ENCODE measurements at regions of chr3 and their contacts with region 1.

Region 1: GRCh38 chr3:12175844-12176453 is 17.2 kb upstream of the TIMP4 start:
- DNase-seq: peak in 8 of 10 donors; percentile 45 to 73 (median 66)
- H3K4me3 ChIP-seq: no peak overlapping the region
- H3K27ac ChIP-seq: peak overlapping the region in 3 of 59 donors; percentile 1 to 34 (median 21)
- H3K27me3 ChIP-seq: no peaks in the 10 kb centered on the region
- CTCF ChIP-seq: peak; percentile 55 to 92 (median 82)

Region 2: DNA sequence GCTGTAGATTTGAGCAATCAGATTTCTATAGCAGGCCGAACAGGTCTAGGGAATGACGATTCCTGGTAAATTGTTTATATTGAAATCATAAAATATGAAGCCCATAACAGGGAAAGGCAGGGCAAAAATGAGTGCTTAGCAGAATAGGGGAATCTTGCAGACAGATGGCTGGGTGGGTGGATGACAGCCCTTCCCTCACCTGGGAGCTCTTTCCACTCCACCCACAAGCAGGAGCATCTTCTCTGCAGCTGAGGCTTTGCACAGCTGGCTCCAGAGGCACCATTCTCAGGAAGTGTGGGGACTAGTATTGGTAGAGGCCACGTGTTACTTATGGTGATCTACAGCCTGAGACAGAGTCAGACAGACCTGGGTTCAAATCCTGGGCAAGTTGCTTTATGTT is 227.6 kb before region 1 on chr3:
- intact Hi-C with region 1: loop called in 1 of 2 experiments (anchors 5 kb)
- DNase-seq: no peak
- H3K4me3 ChIP-seq: no peak overlapping the region
- H3K27ac ChIP-seq: no peak overlapping the region
- H3K27me3 ChIP-seq: no peaks in the 10 kb centered on the region
- CTCF ChIP-seq: no peak

Region 3: DNA sequence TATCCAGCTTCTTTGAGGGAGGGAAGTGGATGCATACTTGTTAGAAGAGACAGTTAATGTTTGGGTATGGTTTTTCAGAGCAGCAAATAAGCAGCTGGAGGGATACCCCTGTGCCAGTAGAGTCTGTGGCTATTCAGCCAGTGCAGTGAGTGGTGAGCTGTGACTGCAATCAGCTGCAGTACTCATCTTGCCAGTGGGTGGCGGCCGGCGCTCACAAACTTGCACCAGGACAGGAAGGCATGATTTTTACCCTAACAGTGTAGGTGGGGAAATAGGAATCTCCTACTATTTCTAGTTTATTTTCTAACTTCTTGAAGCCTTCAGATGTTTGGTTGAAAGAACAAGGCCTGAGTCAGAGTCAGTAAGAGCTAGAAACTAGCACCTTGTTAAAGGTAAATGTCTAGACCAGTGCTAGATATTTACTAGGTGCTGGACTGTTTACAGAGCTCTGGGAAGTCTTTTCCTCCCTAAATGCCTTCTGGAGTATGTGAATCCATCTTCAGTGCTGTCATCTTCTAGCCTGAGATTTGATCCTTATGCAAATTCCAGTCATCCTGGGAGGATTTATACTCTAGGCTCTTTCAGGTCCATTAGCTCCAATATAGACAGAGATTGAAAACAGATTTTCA is 40.8 kb before region 1 on chr3:
- intact Hi-C with region 1: loop called (anchors 2 to 5 kb)
- DNase-seq: peak; percentile 62 to 83 (median 74)
- H3K4me3 ChIP-seq: no peak overlapping the region
- H3K27ac ChIP-seq: peak overlapping the region in 4 of 59 donors; percentile 1 to 58 (median 26)
- H3K27me3 ChIP-seq: peaks cover 0 to 8% (median 0%) of the 10 kb centered on the region in 45 donors
- CTCF ChIP-seq: peak; percentile 17 to 90 (median 78)

Measured in dorsolateral prefrontal cortex (tissue), 120 donors.